Calu3 (cell line): ENCODE measurements at regions of chr19 and their contacts with region 1.

Region 1: GRCh38 chr19:54231077-54231931 is 8.5 kb upstream of the LILRB3 start:
- DNase-seq: peak; percentile 95
- H3K4me3 Mint-ChIP-seq: no peak overlapping the region
- H3K27ac Mint-ChIP-seq: no peak overlapping the region
- H3K4me1 Mint-ChIP-seq: peaks cover 20% of the 10 kb centered on the region
- H3K27me3 Mint-ChIP-seq: peaks cover 74% of the 10 kb centered on the region
- CTCF ChIP-seq: peak; percentile 95

Region 2: DNA sequence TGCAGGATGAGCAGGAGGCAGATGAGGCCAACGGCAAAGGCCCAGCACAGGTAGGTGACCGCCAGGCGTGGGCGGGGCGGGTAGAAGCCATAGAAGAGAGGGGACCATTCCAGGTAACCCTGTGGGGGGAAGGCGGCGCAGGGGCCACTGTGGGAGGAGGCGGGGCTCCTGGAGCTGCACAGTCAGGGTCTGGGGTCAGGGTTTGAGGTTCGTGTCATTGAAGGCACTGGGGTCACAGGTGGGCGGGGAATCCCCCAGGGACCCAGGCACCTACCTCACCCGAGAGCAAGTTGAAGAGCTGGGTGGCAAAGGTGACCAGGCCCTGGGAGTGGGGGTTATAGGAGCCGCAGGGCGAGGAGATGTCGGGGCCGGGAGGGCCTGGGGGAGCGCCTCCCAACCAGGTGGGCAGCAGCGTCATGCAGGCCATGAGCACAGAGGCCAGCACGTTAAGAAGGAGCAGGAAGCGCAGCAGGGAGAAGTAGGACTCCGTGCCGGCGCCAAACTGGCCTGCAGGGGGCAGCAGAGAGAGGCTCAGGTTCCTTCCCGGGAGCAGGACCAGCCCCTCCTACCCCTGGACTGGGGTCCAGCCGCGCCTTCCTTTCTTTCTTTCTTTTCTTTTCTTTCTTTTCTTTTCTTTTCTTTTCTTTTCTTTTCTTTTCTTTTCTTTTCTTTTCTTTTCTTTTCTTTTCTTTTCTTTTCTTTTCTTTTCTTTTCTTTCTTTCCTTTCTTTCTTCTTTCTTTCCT is 63.0 kb before region 1 on chr19:
- CTCF ChIA-PET with region 1: no interaction called
- intact Hi-C with region 1: loop called (anchors 1 kb)
- DNase-seq: peak; percentile 98
- H3K4me3 Mint-ChIP-seq: peak overlapping the region; percentile 11
- H3K27ac Mint-ChIP-seq: peak overlapping the region; percentile 33
- H3K4me1 Mint-ChIP-seq: peaks cover 7% of the 10 kb centered on the region
- H3K27me3 Mint-ChIP-seq: no peaks in the 10 kb centered on the region
- CTCF ChIP-seq: peak; percentile 93

Region 3: DNA sequence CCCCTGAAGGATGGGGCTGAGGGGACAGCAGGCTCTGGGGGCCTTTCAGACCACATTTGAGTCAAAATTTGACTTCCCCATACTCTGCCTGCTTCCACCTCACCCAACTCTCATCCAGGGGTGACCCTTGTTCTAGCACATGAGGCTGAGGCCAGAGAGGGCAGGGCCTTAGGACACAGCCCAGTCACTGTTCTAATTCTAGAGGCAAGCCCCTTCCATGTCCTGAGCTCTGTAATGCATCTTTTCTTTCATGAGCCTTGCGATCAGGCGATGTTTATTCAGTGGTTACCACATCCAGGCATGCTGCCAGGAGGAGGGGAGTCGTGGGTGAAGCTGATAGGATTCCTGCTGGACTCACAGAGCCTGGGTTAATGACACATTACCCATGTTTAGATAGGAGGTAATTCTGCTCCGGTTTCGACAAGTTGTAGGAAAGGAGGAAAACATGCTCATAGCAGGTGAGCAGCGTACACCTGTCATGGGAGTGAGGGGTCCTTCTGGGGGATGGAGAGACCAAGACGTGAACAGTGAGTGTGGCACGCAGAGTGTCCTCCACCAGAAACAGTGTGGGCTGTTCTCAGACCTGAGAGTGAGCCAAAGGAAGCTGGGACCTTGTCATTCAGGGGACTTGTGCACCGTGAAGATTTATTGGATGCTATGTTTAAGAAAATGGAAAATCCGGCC is 21.4 kb before region 1 on chr19:
- CTCF ChIA-PET with region 1: interaction called, 3 read pairs
- intact Hi-C with region 1: loop called (anchors 1 kb)
- DNase-seq: peak; percentile 98
- H3K4me3 Mint-ChIP-seq: peak overlapping the region; percentile 37
- H3K27ac Mint-ChIP-seq: peak overlapping the region; percentile 96
- H3K4me1 Mint-ChIP-seq: peaks cover 51% of the 10 kb centered on the region
- H3K27me3 Mint-ChIP-seq: no peaks in the 10 kb centered on the region
- CTCF ChIP-seq: no peak

Region 4: DNA sequence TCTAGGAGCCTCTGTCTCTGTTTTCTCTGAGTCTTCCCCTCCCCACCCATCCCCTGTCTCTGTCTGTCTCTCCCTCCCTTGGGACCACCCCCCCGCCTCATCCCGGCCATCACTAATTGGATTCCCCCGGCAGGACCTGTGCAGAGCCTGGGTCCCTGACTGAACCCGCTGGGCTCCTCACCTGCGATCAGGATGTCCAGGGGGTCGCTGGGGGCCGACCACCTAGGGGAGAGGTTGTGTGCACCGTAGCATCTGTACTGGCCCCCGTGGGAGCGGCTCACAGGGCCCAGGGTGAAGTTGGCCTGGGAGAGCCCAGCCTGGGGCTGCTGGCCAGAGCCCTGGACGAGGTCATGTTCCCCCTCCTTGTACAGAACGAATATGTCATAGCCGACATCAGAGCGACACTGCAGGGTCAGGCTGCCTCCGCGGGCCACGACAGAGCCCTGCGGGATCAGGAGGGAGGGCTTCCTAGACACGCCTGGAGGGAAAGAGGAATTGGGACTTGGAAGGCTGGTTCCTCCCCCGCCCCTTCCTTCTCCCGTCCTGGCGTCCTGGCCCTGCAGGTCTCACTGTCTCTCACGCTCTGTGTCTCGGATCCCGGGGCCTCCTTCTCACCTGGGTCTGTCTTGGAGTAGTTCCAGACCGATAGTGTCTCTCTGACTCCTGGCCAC is 23.9 kb after region 1 on chr19:
- CTCF ChIA-PET with region 1: no interaction called
- intact Hi-C with region 1: no loop called
- DNase-seq: no peak
- H3K4me3 Mint-ChIP-seq: no peak overlapping the region
- H3K27ac Mint-ChIP-seq: no peak overlapping the region
- H3K4me1 Mint-ChIP-seq: no peaks in the 10 kb centered on the region
- H3K27me3 Mint-ChIP-seq: peaks cover 100% of the 10 kb centered on the region
- CTCF ChIP-seq: no peak

Region 5: DNA sequence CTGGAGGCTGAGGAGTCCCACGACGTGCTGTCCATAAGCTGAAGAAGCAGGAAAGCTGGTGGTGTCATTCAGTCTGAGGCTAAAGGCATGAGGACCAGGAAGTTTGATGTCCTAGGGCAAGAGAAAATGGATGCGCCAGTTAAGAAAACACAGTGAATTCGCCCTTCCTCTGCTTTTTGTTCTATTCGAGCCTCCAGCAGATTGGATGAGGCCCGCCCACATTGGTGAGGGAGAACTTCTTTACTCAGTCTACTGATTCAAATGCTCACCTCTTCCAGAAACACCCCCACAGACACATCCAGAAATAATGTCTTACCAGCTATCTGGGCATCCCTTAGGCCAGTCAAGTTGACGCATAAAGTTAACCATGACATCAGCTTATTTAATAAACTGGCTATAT is 176.5 kb after region 1 on chr19:
- CTCF ChIA-PET with region 1: no interaction called
- intact Hi-C with region 1: no loop called
- DNase-seq: no peak
- H3K4me3 Mint-ChIP-seq: no peak overlapping the region
- H3K27ac Mint-ChIP-seq: no peak overlapping the region
- H3K4me1 Mint-ChIP-seq: no peaks in the 10 kb centered on the region
- H3K27me3 Mint-ChIP-seq: peaks cover 53% of the 10 kb centered on the region
- CTCF ChIP-seq: no peak